ENCODE measurements at regions of chr5 and their contacts with region 1.

Region 1: DNA sequence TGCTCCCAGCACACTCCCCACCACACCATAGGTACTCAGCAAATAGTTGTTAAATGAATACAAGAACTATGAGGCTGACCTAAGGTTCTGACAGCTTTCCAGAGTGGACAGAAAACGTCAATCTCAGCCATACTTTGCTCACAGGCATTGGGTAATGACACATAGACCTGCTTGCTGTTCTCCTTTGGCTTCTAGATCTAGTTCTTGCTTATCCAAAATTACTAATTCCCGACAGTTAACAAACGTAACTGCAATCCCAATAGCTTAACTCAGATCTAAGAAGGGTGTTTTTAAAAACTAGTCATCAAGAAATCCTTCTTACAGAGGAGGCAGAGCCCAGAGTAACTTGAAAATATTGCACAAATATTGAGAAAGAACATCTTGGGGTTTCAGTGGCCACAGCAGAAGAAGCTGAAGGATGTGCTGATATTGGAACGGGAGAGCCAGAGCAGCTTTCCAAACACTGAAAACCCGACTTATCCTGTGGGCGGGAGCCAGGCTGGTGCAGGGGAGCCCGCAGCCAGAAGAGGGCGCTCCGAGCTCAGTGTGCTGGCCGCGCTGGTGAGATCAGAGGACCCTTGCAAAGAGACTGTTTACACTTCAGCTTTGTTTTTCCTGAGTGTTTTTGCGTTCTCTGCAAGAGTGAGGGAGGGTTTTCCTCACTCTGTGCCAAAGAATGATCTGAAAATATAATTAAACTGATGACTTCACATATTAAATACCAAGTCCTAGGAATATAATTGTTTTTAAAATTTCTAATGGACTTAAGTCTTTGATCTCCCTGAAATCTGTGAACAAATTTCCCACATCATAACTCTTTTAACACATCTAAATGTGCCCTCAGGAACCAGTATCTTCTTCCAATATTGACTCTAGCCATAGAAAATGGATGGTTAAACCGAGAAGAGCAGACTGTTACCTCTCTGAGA is 30.3 kb downstream of the FGF1 start:
- DNase-seq: peak; percentile 84
- H3K4me3 ChIP-seq: no peak overlapping the region
- H3K27ac ChIP-seq: no peak overlapping the region
- H3K4me1 ChIP-seq: no peaks in the 10 kb centered on the region
- H3K27me3 ChIP-seq: peaks cover 2 to 14% of the 10 kb centered on the region in 2 experiments
- CTCF ChIP-seq: peak; percentile 96 to 98
- POLR2A ChIP-seq: no peak

Region 2: DNA sequence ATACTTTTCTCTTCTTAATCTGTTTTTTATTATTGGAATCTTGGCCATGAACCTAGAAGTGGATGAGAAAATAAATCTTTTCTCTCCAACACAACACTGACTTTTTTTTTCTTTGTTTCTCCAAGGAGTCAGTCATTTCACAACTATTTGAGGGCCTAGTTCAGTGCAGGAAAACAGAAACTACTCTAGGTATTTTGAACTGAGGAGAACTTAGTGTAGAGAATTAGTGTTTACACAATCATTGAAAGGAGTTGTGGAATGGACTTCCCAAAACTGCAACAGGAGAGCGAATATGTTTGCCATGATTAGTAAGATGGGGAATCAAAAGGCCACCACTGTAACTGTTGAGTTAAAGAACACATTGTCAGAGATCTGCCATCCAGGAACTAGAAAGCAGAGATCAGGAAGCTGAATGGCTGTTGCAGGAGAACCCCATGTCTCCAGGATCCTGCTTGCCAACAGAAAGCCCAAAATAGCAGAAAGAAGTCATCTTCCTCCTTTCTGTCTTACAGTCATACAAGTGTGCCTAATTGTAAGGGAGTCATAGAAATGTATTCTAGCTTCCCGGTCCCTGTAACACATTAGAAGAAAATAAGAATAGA is 757.1 kb before region 1 on chr5:
- CTCF ChIA-PET with region 1: no interaction called
- POLR2A ChIA-PET with region 1: no interaction called
- dilution Hi-C with region 1: no loop called
- intact Hi-C with region 1: no loop called
- DNase-seq: no peak
- H3K4me3 ChIP-seq: no peak overlapping the region
- H3K27ac ChIP-seq: no peak overlapping the region
- H3K4me1 ChIP-seq: no peaks in the 10 kb centered on the region
- H3K27me3 ChIP-seq: peaks cover 7 to 8% of the 10 kb centered on the region in 2 experiments
- CTCF ChIP-seq: no peak
- POLR2A ChIP-seq: no peak

Region 3: DNA sequence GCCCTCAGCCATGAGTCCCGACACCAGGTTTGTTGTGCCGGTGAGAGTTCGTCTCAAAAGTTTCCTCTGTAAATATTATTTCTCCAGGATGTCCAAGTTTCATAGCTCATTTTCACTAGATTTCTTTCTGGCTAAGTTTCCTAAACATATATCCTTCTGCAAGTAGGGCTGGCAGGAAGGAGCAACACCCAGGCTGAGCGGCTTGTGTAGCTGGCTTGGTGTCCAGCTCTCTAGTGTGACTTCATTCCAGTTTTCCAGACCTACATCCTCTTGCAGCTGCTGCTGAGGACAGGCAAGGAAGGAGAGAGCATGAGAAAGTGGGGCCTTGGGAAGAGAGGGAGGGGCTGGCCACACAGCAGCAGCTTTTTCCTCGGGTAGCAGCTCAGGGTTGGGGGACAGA is 50.0 kb before region 1 on chr5:
- CTCF ChIA-PET with region 1: interaction called, 58 read pairs
- POLR2A ChIA-PET with region 1: no interaction called
- dilution Hi-C with region 1: no loop called
- intact Hi-C with region 1: no loop called
- DNase-seq: peak; percentile 31
- H3K4me3 ChIP-seq: no peak overlapping the region
- H3K27ac ChIP-seq: no peak overlapping the region
- H3K4me1 ChIP-seq: peaks cover 11% of the 10 kb centered on the region
- H3K27me3 ChIP-seq: peaks cover 2 to 24% of the 10 kb centered on the region in 2 experiments
- CTCF ChIP-seq: no peak
- POLR2A ChIP-seq: no peak

Region 4: DNA sequence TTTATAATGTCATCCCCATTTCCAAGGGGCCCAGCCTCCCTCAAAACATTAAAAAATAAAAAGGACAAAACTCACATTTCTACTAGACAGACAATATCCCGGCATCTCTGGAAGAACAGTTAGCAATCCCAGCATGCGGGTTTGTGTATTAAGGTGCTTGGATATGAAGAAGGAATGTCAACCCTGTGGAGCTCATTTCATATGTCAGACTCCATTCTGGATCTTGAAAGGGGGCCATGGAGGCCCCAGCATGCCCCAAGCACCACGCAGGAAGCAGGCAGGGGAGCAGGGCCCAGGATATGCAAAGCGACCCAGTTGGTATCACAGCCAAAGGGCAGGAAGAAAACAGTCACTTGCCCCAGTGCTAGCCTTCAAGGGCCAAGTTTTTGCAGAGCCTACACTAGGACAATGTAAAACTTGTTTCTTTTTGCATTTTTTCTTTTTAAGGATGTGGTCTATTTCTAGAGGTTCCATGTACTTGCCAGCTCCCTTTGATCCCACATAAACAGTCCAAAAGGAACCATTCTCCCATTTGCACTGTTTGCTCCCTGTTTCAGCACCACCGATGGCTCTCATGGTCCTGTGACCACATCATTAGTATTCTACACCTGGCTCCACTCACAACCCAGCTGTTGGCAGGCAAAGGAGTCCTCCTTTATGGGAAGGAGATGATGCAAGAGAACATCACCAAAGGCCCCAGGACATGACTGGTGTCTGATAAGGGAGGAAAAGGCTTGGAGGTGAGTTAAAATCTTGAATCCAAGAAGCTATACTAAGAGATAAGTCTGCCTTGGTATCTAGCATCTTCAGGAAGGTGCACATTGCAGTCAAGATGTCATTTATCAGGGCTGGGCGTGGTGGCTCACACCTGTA is 28.0 kb before region 1 on chr5:
- CTCF ChIA-PET with region 1: interaction called, 14 read pairs
- POLR2A ChIA-PET with region 1: no interaction called
- dilution Hi-C with region 1: no loop called
- intact Hi-C with region 1: no loop called
- DNase-seq: no peak
- H3K4me3 ChIP-seq: no peak overlapping the region
- H3K27ac ChIP-seq: no peak overlapping the region
- H3K4me1 ChIP-seq: peaks cover 9% of the 10 kb centered on the region
- H3K27me3 ChIP-seq: peaks cover 2 to 4% of the 10 kb centered on the region in 2 experiments
- CTCF ChIP-seq: no peak
- POLR2A ChIP-seq: no peak

Region 5: DNA sequence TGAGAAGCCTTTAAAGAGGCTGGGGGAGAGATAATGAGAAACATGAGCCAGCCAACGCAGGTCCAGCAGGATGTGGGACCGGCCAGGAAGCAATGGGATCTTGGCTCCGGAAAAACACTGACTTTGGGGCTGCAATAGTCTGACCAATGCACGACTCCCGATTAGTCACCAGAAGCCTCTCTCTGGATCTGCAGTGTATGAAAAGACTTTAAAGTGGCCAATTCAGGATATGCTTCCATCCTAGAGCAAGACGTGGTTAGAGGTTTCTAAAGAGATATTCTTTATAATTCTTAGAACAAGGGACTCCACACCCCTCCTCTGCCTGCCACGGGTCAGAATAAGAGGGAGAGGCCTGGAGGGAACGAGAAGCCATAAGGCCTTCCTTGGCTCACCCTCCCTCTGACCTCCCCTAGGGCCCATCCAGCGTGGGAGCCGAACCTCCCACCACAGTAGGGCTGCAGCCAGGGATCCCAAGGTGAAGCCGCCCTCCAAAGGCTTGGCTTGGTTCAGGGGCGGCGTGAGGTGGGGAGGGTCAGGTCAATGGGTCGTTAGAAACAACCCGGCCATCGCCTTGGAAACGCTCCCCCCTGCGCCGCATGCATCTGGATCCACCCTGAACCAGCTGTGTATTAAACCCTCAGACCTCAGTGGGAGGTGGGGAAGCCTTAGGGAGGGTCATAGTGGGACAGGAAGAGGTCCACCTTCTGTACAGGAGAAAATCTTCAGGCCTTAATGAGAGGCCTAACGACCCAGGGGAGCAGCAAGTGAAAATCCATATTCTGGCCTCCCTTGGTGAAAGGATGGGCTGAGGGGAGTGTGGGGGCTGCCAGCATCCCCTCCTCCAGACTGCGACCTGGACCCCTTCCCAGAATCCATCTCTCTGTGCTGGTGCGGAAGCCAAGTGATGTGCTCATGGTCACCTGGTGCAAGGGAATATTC is 19.2 kb after region 1 on chr5:
- CTCF ChIA-PET with region 1: interaction called, 68 read pairs
- POLR2A ChIA-PET with region 1: no interaction called
- dilution Hi-C with region 1: no loop called
- intact Hi-C with region 1: no loop called
- DNase-seq: peak; percentile 59
- H3K4me3 ChIP-seq: no peak overlapping the region
- H3K27ac ChIP-seq: no peak overlapping the region
- H3K4me1 ChIP-seq: peaks cover 8% of the 10 kb centered on the region
- H3K27me3 ChIP-seq: peaks cover 21 to 28% of the 10 kb centered on the region in 2 experiments
- CTCF ChIP-seq: no peak
- POLR2A ChIP-seq: no peak

Region 6: GRCh38 chr5:142881076-142881783 is 225.6 kb after region 1 on chr5:
- CTCF ChIA-PET with region 1: interaction called, 67 read pairs
- POLR2A ChIA-PET with region 1: no interaction called
- dilution Hi-C with region 1: no loop called
- intact Hi-C with region 1: no loop called
- DNase-seq: no peak
- H3K4me3 ChIP-seq: no peak overlapping the region
- H3K27ac ChIP-seq: no peak overlapping the region
- H3K4me1 ChIP-seq: peaks cover 18% of the 10 kb centered on the region
- H3K27me3 ChIP-seq: no peaks in the 10 kb centered on the region
- CTCF ChIP-seq: no peak
- POLR2A ChIP-seq: no peak